ENCODE measurements at regions of chr1 and their contacts with region 1.

Region 1: DNA sequence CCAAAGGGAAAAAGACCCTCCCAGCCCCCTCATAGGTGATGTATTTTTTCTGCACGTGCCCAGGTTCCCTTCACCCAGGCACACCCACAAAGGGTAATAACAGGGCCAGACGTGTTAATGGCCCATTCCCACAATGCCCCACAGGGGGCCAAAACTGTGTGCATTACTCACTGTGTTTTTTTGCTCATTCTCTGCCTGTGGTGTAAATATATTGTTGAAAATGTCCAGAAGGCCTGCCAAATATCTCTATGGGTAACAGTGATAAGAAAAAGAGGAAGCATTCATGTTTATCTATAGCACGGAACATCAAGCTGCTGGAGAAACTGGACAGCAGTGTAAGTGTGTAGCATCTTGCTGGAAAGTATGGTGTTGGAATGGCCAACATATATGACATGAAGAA is 21.9 kb downstream of the RHEX start:
- DNase-seq: no peak
- ATAC-seq: no peak
- H3K4me3 ChIP-seq: no peak overlapping the region
- H3K27ac ChIP-seq: no peak overlapping the region
- H3K4me1 ChIP-seq: no peaks in the 10 kb centered on the region
- H3K27me3 ChIP-seq: no peaks in the 10 kb centered on the region
- CTCF ChIP-seq: no peak

Region 2: GRCh38 chr1:205870236-205870635 is 204.6 kb before region 1 on chr1:
- intact Hi-C with region 1: no loop called
- DNase-seq: no peak
- ATAC-seq: no peak
- H3K4me3 ChIP-seq: no peak overlapping the region
- H3K27ac ChIP-seq: no peak overlapping the region
- H3K4me1 ChIP-seq: no peaks in the 10 kb centered on the region
- H3K27me3 ChIP-seq: no peaks in the 10 kb centered on the region
- CTCF ChIP-seq: no peak

Region 3: GRCh38 chr1:206021626-206022365 is 53.0 kb before region 1 on chr1:
- intact Hi-C with region 1: loop called in 1 of 2 experiments (anchors 5 kb)
- DNase-seq: no peak
- ATAC-seq: no peak
- H3K4me3 ChIP-seq: no peak overlapping the region
- H3K27ac ChIP-seq: no peak overlapping the region
- H3K4me1 ChIP-seq: no peaks in the 10 kb centered on the region
- H3K27me3 ChIP-seq: no peaks in the 10 kb centered on the region
- CTCF ChIP-seq: no peak